Activated naive CD4-positive, alpha-beta T cell treated with anti-CD3 and anti-CD28 coated beads for 36 hours (primary cell): ENCODE measurements at regions of chr11 and their contacts with region 1.

Region 1: DNA sequence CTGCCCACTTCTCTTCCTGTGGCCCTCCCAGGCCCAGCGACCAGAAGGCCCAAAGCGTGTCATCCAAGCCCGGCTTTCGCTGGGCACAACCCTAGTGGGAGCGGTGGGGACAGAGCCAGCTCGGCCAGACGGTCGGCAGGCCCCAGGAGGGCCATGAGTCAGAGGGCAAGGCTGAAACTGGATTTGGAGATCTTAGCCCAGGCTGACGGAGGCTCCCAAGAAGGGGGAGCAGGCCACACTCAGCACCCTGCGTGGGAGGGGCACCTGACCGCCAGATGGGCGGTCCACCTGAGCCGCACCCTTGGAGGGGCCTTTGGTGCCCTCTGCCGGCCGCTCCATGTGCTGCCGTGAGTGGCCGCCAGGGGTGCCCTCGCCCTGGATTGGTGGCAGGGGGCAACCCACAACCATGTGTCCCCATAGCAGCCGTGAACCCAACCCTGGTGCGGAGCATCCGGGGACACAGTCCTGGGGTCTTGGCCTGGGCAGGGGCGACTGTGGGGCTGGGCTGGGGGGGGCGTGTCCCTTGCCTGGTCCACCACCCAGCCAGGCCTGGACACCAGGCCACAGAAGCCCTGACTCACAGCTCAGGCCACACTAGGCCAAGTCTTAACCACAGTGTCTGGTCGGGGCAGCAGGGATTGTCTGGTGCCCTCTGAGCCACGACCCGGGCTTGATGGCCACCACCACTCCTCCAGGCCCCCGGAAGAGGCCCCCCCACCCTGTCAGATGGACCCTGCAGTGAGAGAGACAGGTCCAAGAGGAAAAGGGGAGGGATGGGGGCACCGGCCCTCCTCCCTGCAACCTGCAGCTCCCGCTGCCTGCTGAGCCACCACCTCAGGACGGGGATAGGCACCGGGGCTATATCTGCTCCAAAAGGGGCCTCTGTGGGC is 19.2 kb upstream of the TALDO1 start:
- DNase-seq: peak; percentile 84
- H3K4me3 Mint-ChIP-seq: no peak overlapping the region
- H3K27ac Mint-ChIP-seq: no peak overlapping the region
- H3K4me1 Mint-ChIP-seq: peaks cover 5% of the 10 kb centered on the region
- H3K27me3 Mint-ChIP-seq: peaks cover 2% of the 10 kb centered on the region

Region 2: GRCh38 chr11:304915-305843 is 422.9 kb before region 1 on chr11:
- CTCF ChIA-PET with region 1: no interaction called
- intact Hi-C with region 1: loop called (anchors 10 kb)
- DNase-seq: peak; percentile 85
- H3K4me3 Mint-ChIP-seq: no peak overlapping the region
- H3K27ac Mint-ChIP-seq: no peak overlapping the region
- H3K4me1 Mint-ChIP-seq: peaks cover 38% of the 10 kb centered on the region
- H3K27me3 Mint-ChIP-seq: peaks cover 8% of the 10 kb centered on the region

Region 3: GRCh38 chr11:554824-555472 is 173.2 kb before region 1 on chr11:
- CTCF ChIA-PET with region 1: interaction called, 26 read pairs
- intact Hi-C with region 1: loop called (anchors 1 kb)
- DNase-seq: peak; percentile 74
- H3K4me3 Mint-ChIP-seq: peak overlapping the region; percentile 39
- H3K27ac Mint-ChIP-seq: no peak overlapping the region
- H3K4me1 Mint-ChIP-seq: peaks cover 4% of the 10 kb centered on the region
- H3K27me3 Mint-ChIP-seq: peaks cover 3% of the 10 kb centered on the region

Region 4: DNA sequence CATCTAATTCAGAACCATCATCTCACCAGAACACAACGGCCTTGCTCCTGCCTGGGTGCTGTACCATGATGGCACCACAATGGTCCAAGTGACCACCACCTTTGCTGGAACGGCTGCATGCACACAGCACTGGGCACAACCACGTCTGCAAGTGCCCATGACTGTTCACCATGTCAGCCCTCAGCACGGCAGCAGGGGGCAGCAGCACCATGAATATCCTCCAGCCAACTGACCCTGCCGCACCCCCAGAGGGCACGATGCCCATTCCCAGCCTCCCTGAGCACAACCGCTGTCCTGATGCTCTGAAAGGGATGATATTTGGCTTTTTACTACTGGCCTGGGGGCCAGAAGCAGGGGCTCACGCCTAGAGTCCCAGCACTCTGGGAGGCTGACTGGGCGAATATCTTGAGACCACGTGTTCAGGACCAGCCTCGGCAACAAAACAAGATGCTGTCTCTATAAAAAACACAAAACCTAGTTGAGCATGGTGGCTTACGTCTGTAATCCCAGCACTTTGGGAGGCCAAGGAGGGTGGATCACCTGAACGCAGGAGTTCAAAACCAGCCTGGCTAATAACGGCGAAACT is 65.3 kb before region 1 on chr11:
- CTCF ChIA-PET with region 1: interaction called, 5 read pairs
- intact Hi-C with region 1: loop called (anchors 1 kb)
- DNase-seq: peak; percentile 59
- H3K4me3 Mint-ChIP-seq: no peak overlapping the region
- H3K27ac Mint-ChIP-seq: no peak overlapping the region
- H3K4me1 Mint-ChIP-seq: no peaks in the 10 kb centered on the region
- H3K27me3 Mint-ChIP-seq: no peaks in the 10 kb centered on the region

Region 5: DNA sequence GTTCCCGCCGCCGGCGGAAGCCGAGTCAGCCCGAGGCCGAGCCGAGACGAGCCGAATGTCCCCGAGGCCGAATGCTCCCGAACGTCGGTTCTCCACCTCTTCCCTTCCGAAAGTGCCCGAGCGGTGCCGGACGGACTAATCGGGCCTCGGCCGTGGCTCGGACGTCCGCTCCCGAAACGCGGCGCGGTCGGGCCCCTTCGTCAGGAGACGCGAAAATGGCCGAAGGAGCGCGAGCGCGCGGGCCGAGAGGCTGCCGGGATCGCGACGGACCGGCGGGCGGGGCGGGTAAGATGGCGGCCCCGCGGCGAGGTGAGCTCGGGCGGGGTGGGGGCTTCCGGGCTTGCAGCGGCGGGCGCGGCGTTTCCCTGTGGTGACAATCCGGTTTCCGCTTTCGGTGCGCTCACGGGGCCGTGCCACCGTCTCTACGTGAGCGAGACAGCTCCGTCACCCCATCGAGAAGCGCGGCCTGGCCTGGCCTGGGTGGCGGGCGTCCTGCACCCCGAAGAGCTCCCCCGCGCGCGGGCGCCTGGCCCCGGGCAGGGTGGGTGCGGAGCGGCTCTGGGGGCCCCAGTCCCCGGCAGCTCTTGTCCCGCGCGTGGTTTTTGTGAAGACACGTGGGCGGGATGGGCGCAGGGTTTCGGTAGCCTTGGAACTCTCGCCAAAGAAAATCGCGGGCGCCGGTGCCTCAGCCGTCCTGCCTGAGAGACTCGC is 32.4 kb before region 1 on chr11 and contains the start of gene TMEM80:
- CTCF ChIA-PET with region 1: interaction called, 9 read pairs
- intact Hi-C with region 1: loop called (anchors 1 kb)
- DNase-seq: peak; percentile 99
- H3K4me3 Mint-ChIP-seq: peak within 1 kb of the TSS; percentile 83
- H3K27ac Mint-ChIP-seq: peak within 1 kb of the TSS; percentile 93
- H3K4me1 Mint-ChIP-seq: peaks cover 54% of the 10 kb centered on the region
- H3K27me3 Mint-ChIP-seq: no peaks in the 10 kb centered on the region
- total RNA-seq, gene TMEM80: 5.6 to 6.0 TPM

Region 6: DNA sequence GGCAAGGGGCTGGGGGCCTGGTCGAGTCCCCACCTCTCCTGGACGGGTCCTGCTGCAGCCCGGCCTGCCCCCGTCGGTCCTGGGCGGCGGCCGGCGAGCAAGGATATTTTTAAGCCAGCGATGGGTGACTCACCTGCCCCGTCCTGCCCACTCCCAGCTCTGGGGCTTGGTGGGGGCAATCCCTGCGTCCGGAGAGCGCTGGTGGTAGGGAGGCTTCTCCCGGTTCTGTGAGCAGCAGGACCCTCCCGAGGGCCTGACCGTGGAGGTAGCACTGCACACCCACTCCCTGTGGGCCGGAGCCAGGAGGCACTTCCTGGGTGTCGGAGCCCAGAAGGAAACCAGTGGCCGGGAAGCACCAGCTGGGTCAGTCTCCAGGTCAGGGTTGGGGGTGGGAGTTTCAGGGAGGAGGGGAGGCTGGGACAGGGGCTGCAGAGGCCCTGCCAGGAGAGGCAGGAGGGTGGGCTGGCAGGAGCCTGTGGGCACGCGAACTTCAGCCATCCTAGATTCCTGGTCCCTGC is 21.6 kb before region 1 on chr11:
- CTCF ChIA-PET with region 1: no interaction called
- intact Hi-C with region 1: no loop called
- DNase-seq: no peak
- H3K4me3 Mint-ChIP-seq: no peak overlapping the region
- H3K27ac Mint-ChIP-seq: no peak overlapping the region
- H3K4me1 Mint-ChIP-seq: peaks cover 5% of the 10 kb centered on the region
- H3K27me3 Mint-ChIP-seq: peaks cover 19% of the 10 kb centered on the region

Region 7: DNA sequence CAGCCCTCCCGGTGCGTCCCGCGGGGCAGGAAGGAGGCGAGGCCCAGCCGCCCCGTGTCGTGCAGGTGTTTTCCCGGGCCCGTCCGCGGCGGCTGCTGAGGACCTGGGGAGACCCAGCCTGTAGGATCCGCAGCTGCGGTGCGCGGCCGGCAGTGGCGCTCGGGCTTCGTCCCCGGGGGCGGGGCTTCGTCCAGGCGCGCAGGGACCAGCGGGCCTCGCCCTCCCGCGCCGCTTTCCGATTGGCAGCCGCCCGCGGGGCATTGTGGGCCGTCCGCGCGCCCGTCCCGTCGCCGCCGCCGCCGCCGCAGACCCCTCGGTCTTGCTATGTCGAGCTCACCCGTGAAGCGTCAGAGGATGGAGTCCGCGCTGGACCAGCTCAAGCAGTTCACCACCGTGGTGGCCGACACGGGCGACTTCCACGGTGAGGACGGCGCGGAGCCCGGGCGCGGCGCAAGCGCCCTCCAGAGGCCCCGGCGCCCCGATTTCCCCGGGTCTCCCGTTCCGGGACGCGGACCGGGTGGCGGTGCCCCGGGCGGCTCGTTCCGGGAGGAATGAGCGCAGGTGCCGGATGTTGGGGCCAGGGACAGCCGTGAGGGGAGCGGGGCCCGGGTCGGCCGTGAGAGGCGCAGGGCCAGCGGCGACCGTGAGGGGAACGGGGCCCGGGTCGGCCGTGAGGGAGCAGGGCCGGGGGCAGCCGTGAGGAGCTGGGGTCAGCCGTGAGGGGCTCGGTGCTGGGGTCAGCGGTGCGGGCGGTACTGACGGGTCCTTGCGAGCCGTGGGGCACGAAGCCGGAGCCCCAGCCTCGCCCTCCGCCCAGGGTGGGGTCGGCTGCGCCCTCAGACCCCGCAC is 19.3 kb after region 1 on chr11 and contains the start of gene TALDO1:
- CTCF ChIA-PET with region 1: interaction called, 5 read pairs
- intact Hi-C with region 1: loop called (anchors 1 kb)
- DNase-seq: peak; percentile 86
- H3K4me3 Mint-ChIP-seq: peak within 1 kb of the TSS; percentile 84
- H3K27ac Mint-ChIP-seq: peak within 1 kb of the TSS; percentile 83
- H3K4me1 Mint-ChIP-seq: peaks cover 21% of the 10 kb centered on the region
- H3K27me3 Mint-ChIP-seq: no peaks in the 10 kb centered on the region
- total RNA-seq, gene TALDO1: 327 to 360 TPM

Region 8: GRCh38 chr11:765025-765801 is 37.1 kb after region 1 on chr11:
- CTCF ChIA-PET with region 1: no interaction called
- intact Hi-C with region 1: loop called (anchors 1 kb)
- DNase-seq: peak; percentile 74
- H3K4me3 Mint-ChIP-seq: no peak overlapping the region
- H3K27ac Mint-ChIP-seq: no peak overlapping the region
- H3K4me1 Mint-ChIP-seq: peaks cover 9% of the 10 kb centered on the region
- H3K27me3 Mint-ChIP-seq: no peaks in the 10 kb centered on the region